Ovary (tissue), 10 donors: ENCODE measurements at regions of chr4 and their contacts with region 1.

Region 1: GRCh38 chr4:7192252-7193029 is at the start of gene SORCS2:
- DNase-seq: peak; percentile 73 to 88 (median 81)
- H3K4me3 ChIP-seq: peak within 1 kb of the TSS; percentile 32
- H3K27ac ChIP-seq: peak within 1 kb of the TSS; percentile 28 to 32
- H3K4me1 ChIP-seq: peaks cover 8% of the 10 kb centered on the region
- H3K27me3 ChIP-seq: no peaks in the 10 kb centered on the region
- CTCF ChIP-seq: peak in 2 of 3 donors; percentile 92 to 93
- EP300 ChIP-seq: no peak
- POLR2A ChIP-seq: no peak
- total RNA-seq, gene SORCS2: 0.60 to 23.9 (median 7.1) TPM

Region 2: GRCh38 chr4:6944301-6945051 is 248.0 kb before region 1 on chr4:
- intact Hi-C with region 1: no loop called
- DNase-seq: no peak
- H3K4me3 ChIP-seq: no peak overlapping the region
- H3K27ac ChIP-seq: no peak overlapping the region
- H3K4me1 ChIP-seq: peaks cover 12% of the 10 kb centered on the region
- H3K27me3 ChIP-seq: no peaks in the 10 kb centered on the region
- CTCF ChIP-seq: no peak
- EP300 ChIP-seq: no peak
- POLR2A ChIP-seq: no peak

Region 3: GRCh38 chr4:7295911-7296660 is 103.6 kb after region 1 on chr4:
- intact Hi-C with region 1: loop called (anchors 2 to 5 kb)
- DNase-seq: peak; percentile 38 to 63 (median 62)
- H3K4me3 ChIP-seq: no peak overlapping the region
- H3K27ac ChIP-seq: no peak overlapping the region
- H3K4me1 ChIP-seq: peaks cover 4% of the 10 kb centered on the region
- H3K27me3 ChIP-seq: no peaks in the 10 kb centered on the region
- CTCF ChIP-seq: peak; percentile 14 to 64 (median 53)
- EP300 ChIP-seq: no peak
- POLR2A ChIP-seq: no peak

Region 4: DNA sequence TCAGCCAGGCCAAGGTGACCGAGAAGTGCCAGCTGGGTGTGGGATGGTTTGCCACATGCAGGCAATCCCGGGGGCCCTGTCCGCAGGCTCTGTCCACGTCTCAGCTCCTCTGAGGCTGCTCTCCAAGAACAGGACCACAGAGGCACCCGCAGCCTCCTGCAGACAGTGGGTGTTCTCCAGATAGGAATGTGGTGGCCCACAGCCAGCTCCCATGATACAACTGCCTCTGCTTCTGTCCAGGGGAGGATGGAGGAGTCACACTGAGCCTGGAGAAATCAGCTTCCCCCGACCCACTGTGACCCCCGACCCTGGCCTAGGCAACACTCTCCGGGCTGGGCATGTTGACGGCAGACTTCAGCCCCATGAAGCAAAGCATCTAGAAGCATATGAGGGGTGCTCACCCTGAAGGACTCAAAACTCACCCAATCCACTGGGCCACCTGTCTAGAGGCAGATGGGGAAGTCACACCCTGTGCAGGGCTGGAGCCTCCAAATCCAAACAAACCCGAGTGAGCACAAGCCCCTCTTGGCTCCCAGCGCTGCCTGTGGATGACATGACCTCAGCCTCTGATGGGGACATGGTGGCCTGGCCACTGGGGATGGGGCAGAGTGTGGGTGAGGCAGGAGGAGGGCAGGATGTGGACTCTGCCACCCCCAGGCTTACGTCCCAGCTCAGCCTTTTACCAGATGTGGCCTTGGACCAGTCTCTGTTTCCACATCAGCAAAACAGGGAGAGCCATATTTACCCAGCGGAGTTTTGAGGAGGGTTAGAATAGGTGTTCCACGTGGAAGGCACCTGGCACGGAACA is 140.0 kb after region 1 on chr4:
- intact Hi-C with region 1: loop called in 2 of 4 experiments (anchors 5 kb)
- DNase-seq: peak; percentile 78 to 89 (median 80)
- H3K4me3 ChIP-seq: no peak overlapping the region
- H3K27ac ChIP-seq: no peak overlapping the region
- H3K4me1 ChIP-seq: peaks cover 39% of the 10 kb centered on the region
- H3K27me3 ChIP-seq: no peaks in the 10 kb centered on the region
- CTCF ChIP-seq: no peak
- EP300 ChIP-seq: no peak
- POLR2A ChIP-seq: no peak

Region 5: GRCh38 chr4:7392438-7393421 is 200.3 kb after region 1 on chr4:
- intact Hi-C with region 1: loop called in 2 of 4 experiments (anchors 5 kb)
- DNase-seq: peak; percentile 65 to 78 (median 68)
- H3K4me3 ChIP-seq: no peak overlapping the region
- H3K27ac ChIP-seq: no peak overlapping the region
- H3K4me1 ChIP-seq: peaks cover 14% of the 10 kb centered on the region
- H3K27me3 ChIP-seq: no peaks in the 10 kb centered on the region
- CTCF ChIP-seq: peak in 2 of 3 donors; percentile 14 to 33
- EP300 ChIP-seq: no peak
- POLR2A ChIP-seq: no peak

Region 6: GRCh38 chr4:7719354-7720174 is 527.1 kb after region 1 on chr4:
- intact Hi-C with region 1: loop called (anchors 2 to 5 kb)
- DNase-seq: peak; percentile 69 to 87 (median 83)
- H3K4me3 ChIP-seq: no peak overlapping the region
- H3K27ac ChIP-seq: no peak overlapping the region
- H3K4me1 ChIP-seq: peaks cover 2% of the 10 kb centered on the region
- H3K27me3 ChIP-seq: no peaks in the 10 kb centered on the region
- CTCF ChIP-seq: peak; percentile 77 to 81 (median 80)
- EP300 ChIP-seq: no peak
- POLR2A ChIP-seq: no peak